ENCODE measurements at regions of chr1 and their contacts with region 1.

Region 1: DNA sequence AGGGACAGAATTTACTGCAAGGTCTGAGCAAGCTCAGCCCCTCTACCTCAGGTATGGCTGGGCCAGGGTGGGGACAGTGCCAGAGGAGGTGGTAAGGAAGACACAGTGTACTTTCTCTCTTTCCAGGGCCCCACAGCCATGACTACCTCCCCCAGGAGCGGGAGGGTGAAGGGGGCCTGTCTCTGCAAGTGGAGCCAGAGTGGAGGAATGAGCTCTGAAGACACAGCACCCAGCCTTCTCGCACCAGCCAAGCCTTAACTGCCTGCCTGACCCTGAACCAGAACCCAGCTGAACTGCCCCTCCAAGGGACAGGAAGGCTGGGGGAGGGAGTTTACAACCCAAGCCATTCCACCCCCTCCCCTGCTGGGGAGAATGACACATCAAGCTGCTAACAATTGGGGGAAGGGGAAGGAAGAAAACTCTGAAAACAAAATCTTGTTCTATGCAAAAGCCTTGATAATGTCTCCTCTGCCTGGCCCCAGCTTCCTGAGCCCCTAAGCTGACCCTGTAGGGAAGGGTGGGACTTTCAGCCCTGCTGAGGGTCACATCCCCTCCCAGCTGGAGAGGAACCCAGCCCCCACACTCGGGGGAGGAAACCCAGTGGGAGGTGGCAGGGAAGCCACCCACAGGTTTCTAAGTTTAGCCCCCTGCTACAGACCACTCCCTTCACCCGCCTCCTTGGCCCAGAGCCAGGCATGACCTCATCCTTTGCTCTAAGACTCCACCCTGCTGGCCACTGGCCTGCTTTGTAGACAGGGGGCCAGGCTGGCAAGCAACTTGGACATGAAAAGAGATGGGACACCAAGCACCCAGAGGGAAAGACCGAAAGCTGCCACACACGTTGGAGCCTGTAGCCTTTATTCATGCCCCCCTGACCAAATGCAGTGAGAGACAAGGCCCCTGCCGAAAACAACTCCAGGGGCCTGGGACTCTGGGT is 6.4 kb downstream of the RHOC start:
- DNase-seq: peak; percentile 92 to 96 (median 96)
- H3K4me3 ChIP-seq: peak overlapping the region in 5 of 7 experiments; percentile 13 to 53 (median 36)
- H3K27ac ChIP-seq: peak overlapping the region; percentile 61 to 88
- H3K4me1 ChIP-seq: peaks cover 11 to 55% (median 46%) of the 10 kb centered on the region in 4 experiments
- H3K27me3 ChIP-seq: no peaks in the 10 kb centered on the region

Region 2: GRCh38 chr1:112643080-112643479 is 57.5 kb before region 1 on chr1:
- CTCF ChIA-PET with region 1: no interaction called
- POLR2A ChIA-PET with region 1: no interaction called
- DNase-seq: no peak
- H3K4me3 ChIP-seq: no peak overlapping the region
- H3K27ac ChIP-seq: no peak overlapping the region
- H3K4me1 ChIP-seq: no peaks in the 10 kb centered on the region
- H3K27me3 ChIP-seq: no peaks in the 10 kb centered on the region

Region 3: DNA sequence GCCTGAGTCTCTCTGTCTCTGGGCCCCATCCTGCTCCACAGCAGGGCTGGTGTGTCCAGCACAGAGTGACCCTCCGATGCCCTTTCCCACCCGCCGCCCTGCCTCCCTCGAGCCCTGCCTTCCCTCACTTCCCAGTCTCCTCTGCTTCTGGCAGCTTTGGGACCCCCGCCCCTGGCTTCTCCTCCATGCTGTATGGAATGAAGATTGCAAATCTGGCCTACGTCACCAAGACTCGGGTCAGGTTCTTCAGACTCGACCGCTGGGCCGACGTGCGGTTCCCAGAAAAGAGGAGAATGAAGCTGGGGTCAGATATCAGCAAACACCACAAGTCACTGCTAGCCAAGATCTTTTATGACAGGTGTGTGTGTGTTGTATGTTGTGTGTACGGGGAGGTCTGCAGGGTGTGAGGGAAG is 11.8 kb before region 1 on chr1:
- CTCF ChIA-PET with region 1: interaction called, 10 read pairs
- POLR2A ChIA-PET with region 1: no interaction called
- DNase-seq: no peak
- H3K4me3 ChIP-seq: no peak overlapping the region
- H3K27ac ChIP-seq: no peak overlapping the region
- H3K4me1 ChIP-seq: no peaks in the 10 kb centered on the region
- H3K27me3 ChIP-seq: no peaks in the 10 kb centered on the region

Measured in common myeloid progenitor, CD34-positive (primary cell).